ENCODE measurements at regions of chr9 and their contacts with region 1.

Region 1: DNA sequence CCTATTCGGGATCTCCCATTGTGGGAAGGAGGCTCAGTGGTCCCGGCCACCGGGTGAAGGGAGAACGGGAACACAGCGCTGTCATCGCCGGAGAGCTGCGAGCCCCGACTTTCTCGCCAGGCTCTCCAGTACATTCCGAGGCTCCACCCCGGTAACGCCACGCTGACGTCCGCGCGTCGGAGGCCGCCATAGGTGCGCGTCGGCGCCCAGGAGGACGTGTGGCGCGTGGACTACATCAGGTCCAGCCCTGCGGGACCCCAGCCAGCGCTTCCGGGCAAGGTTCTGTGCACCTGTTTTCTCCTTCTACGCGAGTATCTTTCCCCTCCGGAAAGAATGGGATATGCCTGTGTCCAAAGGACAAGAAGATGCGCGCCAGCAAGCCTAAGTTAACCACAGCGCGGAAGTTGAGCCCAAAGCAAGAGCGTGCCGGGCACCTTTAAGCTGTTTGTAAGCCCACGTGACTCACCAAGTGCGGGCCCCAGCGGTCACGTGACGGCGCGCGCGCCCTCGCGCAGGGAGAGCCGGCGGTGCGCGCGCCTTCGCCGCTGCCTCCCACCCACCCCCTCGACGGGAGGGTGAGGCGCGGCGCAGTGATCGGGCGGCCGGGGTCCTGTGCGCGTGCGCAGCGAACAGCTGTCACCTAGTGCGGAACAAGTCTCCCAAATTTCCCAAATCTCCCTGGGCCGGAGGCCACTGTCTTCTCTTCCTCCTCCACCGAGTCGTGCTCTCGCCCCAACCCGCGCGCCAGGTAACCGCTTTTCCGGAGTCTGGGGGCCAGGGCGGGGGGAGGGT is at the start of gene KDM4C:
- DNase-seq: peak; percentile 91
- H3K4me3 Mint-ChIP-seq: peak within 1 kb of the TSS; percentile 97
- H3K27ac Mint-ChIP-seq: peak within 1 kb of the TSS; percentile 100
- H3K4me1 Mint-ChIP-seq: peaks cover 16% of the 10 kb centered on the region
- H3K27me3 Mint-ChIP-seq: no peaks in the 10 kb centered on the region
- total RNA-seq, gene KDM4C: 36.0 and 38.4 TPM in 2 replicates

Region 2: GRCh38 chr9:6703898-6704639 is 53.6 kb before region 1 on chr9:
- intact Hi-C with region 1: loop called (anchors 1 kb)
- DNase-seq: peak; percentile 82
- H3K4me3 Mint-ChIP-seq: peak overlapping the region; percentile 91
- H3K27ac Mint-ChIP-seq: peak overlapping the region; percentile 91
- H3K4me1 Mint-ChIP-seq: peaks cover 20% of the 10 kb centered on the region
- H3K27me3 Mint-ChIP-seq: peaks cover 2% of the 10 kb centered on the region

Region 3: DNA sequence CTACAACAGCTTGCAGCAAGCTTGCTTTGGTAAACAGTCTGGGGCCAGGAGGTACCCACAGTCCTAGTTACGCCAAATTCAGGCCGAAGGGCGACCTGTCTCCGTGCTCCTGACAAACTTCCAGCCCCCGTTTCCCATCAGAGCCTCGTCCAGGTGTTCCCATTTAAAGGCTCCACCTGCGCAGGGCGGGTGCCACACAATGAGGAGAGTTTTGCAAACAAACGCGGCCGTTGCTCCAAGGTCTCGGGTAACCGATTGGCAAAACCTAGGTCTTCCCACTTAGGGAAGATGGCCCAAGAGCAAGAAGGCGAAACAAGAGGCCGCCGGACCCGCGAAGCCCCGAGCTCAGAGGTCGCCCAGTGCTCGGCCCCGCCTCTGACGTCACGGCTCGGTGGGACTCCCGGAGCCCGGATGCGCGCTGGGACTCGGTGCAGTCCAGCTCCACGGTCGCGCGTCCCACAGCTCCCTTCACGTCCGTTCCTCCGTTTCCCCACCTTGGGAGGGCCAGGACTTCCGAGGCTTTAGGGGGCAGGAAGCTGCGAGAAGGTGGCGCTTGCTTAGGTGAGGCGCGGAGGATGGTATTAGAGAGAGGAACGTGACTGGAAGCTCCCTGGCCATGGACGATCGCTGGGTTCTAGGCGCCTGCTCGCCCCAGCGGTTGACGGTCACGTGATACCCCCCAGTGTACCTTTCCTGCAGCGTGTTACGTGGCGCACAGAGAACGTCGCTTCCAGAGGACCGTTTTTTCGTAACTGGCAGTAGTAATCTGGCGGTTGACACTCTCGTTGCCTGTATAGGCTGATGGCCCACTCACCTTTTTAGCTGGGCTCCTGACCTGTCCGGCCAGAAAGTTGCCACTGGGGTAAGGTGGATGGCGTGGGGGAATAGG is 41.7 kb before region 1 on chr9:
- intact Hi-C with region 1: loop called (anchors 2 kb)
- DNase-seq: peak; percentile 58
- H3K4me3 Mint-ChIP-seq: peak overlapping the region; percentile 83
- H3K27ac Mint-ChIP-seq: peak overlapping the region; percentile 91
- H3K4me1 Mint-ChIP-seq: peaks cover 6% of the 10 kb centered on the region
- H3K27me3 Mint-ChIP-seq: no peaks in the 10 kb centered on the region

Region 4: GRCh38 chr9:6793203-6793602 is 35.6 kb after region 1 on chr9:
- intact Hi-C with region 1: no loop called
- DNase-seq: no peak
- H3K4me3 Mint-ChIP-seq: no peak overlapping the region
- H3K27ac Mint-ChIP-seq: no peak overlapping the region
- H3K4me1 Mint-ChIP-seq: peaks cover 1% of the 10 kb centered on the region
- H3K27me3 Mint-ChIP-seq: no peaks in the 10 kb centered on the region

Region 5: DNA sequence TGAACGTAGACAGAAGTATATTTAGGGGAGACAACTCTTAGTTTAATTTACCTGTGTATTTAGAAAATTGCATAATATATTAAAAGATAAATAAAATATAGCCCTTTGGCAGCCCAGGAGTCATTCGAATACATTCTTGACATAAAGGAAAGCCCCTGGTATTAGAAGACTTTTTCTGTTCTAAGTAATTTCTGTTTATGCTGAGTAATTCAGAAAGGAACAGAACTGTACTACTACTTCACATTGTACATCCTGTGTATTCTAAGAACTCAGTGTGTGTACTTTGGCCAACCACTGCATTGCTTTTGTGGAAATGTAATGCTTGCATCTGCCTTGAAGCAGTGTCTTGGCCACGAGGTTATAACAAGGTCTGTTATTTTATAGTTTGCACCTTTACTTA is 136.5 kb after region 1 on chr9:
- intact Hi-C with region 1: loop called (anchors 10 kb)
- DNase-seq: no peak
- H3K4me3 Mint-ChIP-seq: peak overlapping the region; percentile 19
- H3K27ac Mint-ChIP-seq: peak overlapping the region; percentile 74
- H3K4me1 Mint-ChIP-seq: peaks cover 51% of the 10 kb centered on the region
- H3K27me3 Mint-ChIP-seq: no peaks in the 10 kb centered on the region